A673 (cell line): ENCODE measurements at regions of chr7 and their contacts with region 1.

Region 1: DNA sequence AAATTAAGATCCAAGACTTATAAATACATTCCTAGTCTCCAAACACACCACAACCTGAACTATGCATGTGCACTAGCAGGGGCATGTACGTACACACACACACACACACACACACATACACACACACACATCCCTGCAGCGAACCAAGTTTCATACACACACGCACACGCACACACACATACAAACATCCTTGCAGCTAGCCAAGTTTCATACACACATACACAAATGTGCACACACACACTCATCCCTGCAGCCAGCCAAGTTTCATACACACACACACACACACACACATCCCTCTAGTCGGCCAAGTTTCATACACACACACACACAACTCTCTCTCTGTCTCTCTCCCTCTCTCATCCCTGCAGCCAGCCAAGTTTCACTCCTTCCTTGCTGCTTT is 82.7 kb upstream of the WIPF3 start:
- DNase-seq: no peak
- H3K4me3 ChIP-seq: no peak overlapping the region
- H3K27ac ChIP-seq: no peak overlapping the region
- H3K4me1 ChIP-seq: no peaks in the 10 kb centered on the region
- H3K27me3 ChIP-seq: no peaks in the 10 kb centered on the region
- CTCF ChIP-seq: no peak

Region 2: DNA sequence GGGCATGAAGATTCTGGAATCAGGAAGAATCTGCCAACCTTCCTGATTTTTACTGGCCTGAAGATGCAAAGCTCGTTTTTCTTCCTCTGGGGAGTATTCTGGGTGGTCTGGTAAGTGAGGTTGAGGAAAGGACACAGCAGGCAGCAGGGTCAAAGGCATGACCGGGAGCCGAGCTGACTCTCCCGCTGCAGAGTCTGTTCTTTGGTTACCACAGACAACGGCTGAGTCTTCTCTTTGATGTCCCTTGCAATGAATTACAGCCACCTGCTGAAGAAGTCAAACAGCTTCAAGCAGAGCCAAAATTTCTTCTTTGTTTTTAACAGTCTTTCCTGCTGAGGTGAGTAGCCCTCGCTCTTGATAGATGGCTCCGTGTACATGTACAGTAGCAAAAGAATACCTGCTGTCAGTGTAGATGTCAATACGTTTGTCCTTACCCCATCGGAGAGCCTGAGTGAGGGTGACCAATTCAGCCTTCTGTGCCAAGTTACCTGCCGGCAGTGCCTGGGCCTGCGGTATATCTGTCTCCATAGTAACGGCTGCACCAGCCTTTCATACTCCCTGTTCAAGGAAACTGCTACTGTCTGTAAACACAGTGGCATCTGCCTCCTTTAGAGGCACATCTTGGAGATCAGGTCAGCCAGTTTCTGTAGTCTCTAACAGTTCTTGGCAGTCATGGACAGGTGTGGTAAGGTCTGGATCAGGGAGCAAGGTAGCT is 83.6 kb before region 1 on chr7:
- CTCF ChIA-PET with region 1: no interaction called
- POLR2A ChIA-PET with region 1: no interaction called
- intact Hi-C with region 1: loop called (anchors 10 kb)
- DNase-seq: no peak
- H3K4me3 ChIP-seq: no peak overlapping the region
- H3K27ac ChIP-seq: no peak overlapping the region
- H3K4me1 ChIP-seq: no peaks in the 10 kb centered on the region
- H3K27me3 ChIP-seq: no peaks in the 10 kb centered on the region
- CTCF ChIP-seq: no peak

Region 3: DNA sequence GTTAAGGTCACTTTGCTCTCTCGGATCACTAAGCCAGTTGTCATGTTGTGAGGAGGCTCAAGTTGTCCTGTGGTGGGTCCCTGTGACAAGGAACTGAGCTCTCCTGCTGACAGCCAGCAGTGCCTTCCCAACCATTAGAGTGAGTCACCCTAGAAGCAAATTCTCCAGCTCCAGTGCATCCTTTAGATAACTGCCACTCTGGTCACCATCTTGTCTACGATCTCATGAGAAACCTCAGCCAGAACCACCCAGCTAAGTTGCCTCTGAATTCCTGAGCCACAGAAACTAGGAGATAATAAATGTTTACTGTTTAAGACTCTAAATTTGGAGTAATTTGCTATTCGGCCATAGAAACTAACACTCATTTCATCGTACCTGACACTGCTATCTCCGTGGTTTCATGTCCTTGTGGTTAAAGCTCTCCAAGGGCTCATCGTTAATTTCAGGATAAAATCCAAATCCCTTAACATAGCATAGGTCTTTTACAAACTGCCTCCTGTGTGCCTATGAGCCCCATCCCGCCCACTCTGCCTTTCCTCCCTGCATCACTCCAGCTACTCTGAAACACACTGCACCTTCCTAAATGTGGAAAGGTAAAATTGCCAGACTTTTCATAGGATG is 26.2 kb after region 1 on chr7:
- CTCF ChIA-PET with region 1: no interaction called
- POLR2A ChIA-PET with region 1: no interaction called
- intact Hi-C with region 1: no loop called
- DNase-seq: no peak
- H3K4me3 ChIP-seq: no peak overlapping the region
- H3K27ac ChIP-seq: no peak overlapping the region
- H3K4me1 ChIP-seq: no peaks in the 10 kb centered on the region
- H3K27me3 ChIP-seq: no peaks in the 10 kb centered on the region
- CTCF ChIP-seq: no peak

Region 4: DNA sequence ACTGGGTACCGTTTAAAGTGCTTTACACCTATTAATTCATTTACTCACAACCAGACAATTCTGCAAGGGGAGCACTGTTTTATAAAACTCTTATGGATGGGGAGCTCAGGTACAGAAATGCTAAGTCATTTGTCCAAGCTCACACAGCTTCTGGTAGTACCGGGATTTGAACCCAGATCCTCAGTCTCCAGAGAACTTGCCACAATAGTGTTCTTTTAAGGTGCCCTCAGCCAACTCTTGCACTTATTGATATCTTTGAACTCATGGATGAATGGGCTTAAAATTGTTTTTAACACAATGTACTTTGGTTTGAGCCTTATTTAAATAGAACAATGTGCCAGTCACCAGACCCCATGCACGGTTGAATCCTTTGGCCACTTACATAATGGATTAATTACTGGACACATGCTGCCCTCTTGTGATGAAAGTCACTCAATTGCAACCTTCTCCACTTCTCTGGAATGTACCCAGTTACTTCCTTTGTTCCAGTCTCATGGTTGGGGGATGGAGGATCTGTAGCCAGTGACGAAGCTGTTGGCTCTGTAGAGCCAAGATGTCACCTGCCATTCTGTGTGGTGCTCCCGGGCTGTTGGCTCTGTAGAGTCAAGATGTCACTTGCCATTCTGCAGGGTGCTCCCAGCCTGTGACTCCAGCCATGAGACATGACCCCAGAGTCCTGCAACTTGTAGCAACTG is 689.4 kb after region 1 on chr7:
- CTCF ChIA-PET with region 1: no interaction called
- POLR2A ChIA-PET with region 1: no interaction called
- intact Hi-C with region 1: no loop called
- DNase-seq: peak; percentile 74
- H3K4me3 ChIP-seq: no peak overlapping the region
- H3K27ac ChIP-seq: no peak overlapping the region
- H3K4me1 ChIP-seq: no peaks in the 10 kb centered on the region
- H3K27me3 ChIP-seq: no peaks in the 10 kb centered on the region
- CTCF ChIP-seq: peak; percentile 57